HepG2 (cell line): ENCODE measurements at regions of chr19 and their contacts with region 1.

Region 1: GRCh38 chr19:45340232-45340898 is at the start of gene KLC3:
- DNase-seq: no peak
- ATAC-seq: peak; percentile 20; the same call in 2 of the 3 replicates
- H3K4me3 ChIP-seq: peak within 1 kb of the TSS; percentile 42 to 66 (median 49); a peak in 5 of 6 replicates
- H3K27ac ChIP-seq: no peak within 1 kb of the TSS
- H3K4me1 ChIP-seq: peaks cover 25% of the 10 kb centered on the region
- H3K27me3 ChIP-seq: peaks cover 9 to 44% of the 10 kb centered on the region in 2 experiments; a peak in 4 of 5 replicates
- CTCF ChIP-seq: no peak
- EP300 ChIP-seq: no peak
- POLR2A ChIP-seq: no peak
- RAD21 ChIP-seq: no peak
- total RNA-seq, gene KLC3: not detected in 2 replicates

Region 2: GRCh38 chr19:45164577-45165335 is 175.6 kb before region 1 on chr19:
- CTCF ChIA-PET with region 1: no interaction called
- POLR2A ChIA-PET with region 1: no interaction called
- in situ Hi-C with region 1: no loop called
- intact Hi-C with region 1: loop called (anchors 2 kb)
- DNase-seq: peak; percentile 79
- ATAC-seq: peak; percentile 57
- H3K4me3 ChIP-seq: peak overlapping the region; percentile 28 to 64 (median 36)
- H3K27ac ChIP-seq: no peak overlapping the region
- H3K4me1 ChIP-seq: peaks cover 96% of the 10 kb centered on the region
- H3K27me3 ChIP-seq: peaks cover 12 to 21% of the 10 kb centered on the region in 2 experiments; a peak in 4 of 5 replicates
- CTCF ChIP-seq: peak; percentile 38
- EP300 ChIP-seq: no peak
- POLR2A ChIP-seq: no peak
- RAD21 ChIP-seq: 0 out of 2 replicates have a peak, but pooled peaks have one; percentile 14

Region 3: DNA sequence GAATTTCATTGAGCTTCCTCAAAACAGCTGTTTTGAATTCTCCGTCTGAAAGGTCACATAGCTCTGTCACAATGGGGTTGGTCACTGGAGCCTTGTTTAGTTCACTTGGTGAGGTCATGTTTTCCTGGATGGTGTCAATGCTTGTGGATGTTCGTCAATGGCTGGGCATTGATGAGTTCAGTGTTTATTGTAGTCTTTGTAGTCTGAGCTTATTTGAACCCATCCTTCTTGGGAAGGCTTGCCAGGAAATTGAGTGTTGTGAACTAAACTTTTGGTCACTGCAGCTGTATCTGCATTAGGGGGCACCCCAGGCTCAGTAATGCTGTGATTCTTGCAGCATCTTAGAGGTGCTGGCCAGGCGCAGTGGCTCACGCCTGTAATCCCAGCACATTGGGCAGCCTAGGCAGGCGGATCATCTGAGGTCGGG is 139.8 kb before region 1 on chr19:
- CTCF ChIA-PET with region 1: interaction called, 18 read pairs
- POLR2A ChIA-PET with region 1: interaction called, 4 read pairs
- in situ Hi-C with region 1: loop called (anchors 10 kb)
- intact Hi-C with region 1: loop called (anchors 1 kb)
- DNase-seq: peak; percentile 62
- ATAC-seq: peak; percentile 86
- H3K4me3 ChIP-seq: no peak overlapping the region
- H3K27ac ChIP-seq: no peak overlapping the region
- H3K4me1 ChIP-seq: no peaks in the 10 kb centered on the region
- H3K27me3 ChIP-seq: peaks cover 0 to 16% of the 10 kb centered on the region in 2 experiments; a peak in 2 of 5 replicates
- CTCF ChIP-seq: peak; percentile 89
- EP300 ChIP-seq: no peak
- POLR2A ChIP-seq: no peak
- RAD21 ChIP-seq: peak; percentile 84

Region 4: DNA sequence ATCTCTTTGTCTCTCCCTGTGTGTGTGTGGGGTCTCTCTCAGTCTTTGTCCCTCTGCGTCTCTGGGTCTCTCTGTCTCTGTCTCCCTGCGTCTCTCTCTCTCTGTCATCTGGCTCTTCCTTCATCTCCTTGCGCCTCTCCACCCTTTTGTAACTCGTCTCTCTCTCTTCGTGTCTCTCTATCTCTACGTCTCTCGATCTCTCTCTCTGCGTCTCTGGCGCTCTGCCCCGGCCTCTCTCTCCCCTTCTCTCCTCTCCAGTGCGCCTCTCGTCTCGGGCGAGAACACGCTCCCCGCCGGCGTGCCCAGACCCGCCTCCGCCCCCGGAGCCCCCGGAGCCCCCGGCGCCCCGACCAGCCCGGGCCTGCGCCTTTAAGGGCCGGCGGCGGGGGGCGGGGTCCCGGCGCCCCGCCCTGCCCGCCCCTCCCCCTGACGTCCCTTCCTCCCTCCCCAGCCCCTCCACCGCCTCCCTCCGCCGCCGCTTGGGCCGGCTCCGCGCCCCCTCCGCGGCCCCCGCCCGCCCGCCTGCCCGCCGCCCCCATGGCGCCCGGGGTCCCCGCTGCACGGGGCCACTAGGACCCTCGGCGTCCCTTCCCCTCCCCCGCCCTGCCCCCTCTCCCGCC is 89.4 kb before region 1 on chr19 and contains the start of gene MARK4:
- CTCF ChIA-PET with region 1: no interaction called
- POLR2A ChIA-PET with region 1: no interaction called
- in situ Hi-C with region 1: loop called (anchors 5 kb)
- intact Hi-C with region 1: loop called (anchors 2 kb)
- DNase-seq: no peak
- ATAC-seq: peak; percentile 50
- H3K4me3 ChIP-seq: peak within 1 kb of the TSS; percentile 80 to 91 (median 91)
- H3K27ac ChIP-seq: peak within 1 kb of the TSS; percentile 61
- H3K4me1 ChIP-seq: peaks cover 71% of the 10 kb centered on the region
- H3K27me3 ChIP-seq: no peaks in the 10 kb centered on the region; a peak in 1 of 5 replicates
- CTCF ChIP-seq: no peak
- EP300 ChIP-seq: no peak
- POLR2A ChIP-seq: peak in 1 of 2 experiments; percentile 55; a peak in 2 of 4 replicates
- RAD21 ChIP-seq: no peak
- total RNA-seq, gene MARK4: 7.0 and 7.6 TPM in 2 replicates

Region 5: GRCh38 chr19:45306518-45307027 is 33.8 kb before region 1 on chr19:
- CTCF ChIA-PET with region 1: no interaction called
- POLR2A ChIA-PET with region 1: no interaction called
- in situ Hi-C with region 1: no loop called
- intact Hi-C with region 1: no loop called
- DNase-seq: no peak
- ATAC-seq: no peak
- H3K4me3 ChIP-seq: no peak overlapping the region
- H3K27ac ChIP-seq: no peak overlapping the region
- H3K4me1 ChIP-seq: peaks cover 27% of the 10 kb centered on the region
- H3K27me3 ChIP-seq: 0 out of 5 replicates have a peak, but pooled peaks cover 0 to 2% of the 10 kb centered on the region in 2 experiments
- CTCF ChIP-seq: no peak
- EP300 ChIP-seq: no peak
- POLR2A ChIP-seq: no peak
- RAD21 ChIP-seq: no peak